Prostate gland (tissue), 2 donors: ENCODE measurements at regions of chr19 and their contacts with region 1.

Region 1: GRCh38 chr19:12162882-12163806 is at the start of gene ZNF136:
- DNase-seq: peak; percentile 89
- H3K4me3 ChIP-seq: peak within 1 kb of the TSS; percentile 72 to 89
- H3K27ac ChIP-seq: peak within 1 kb of the TSS; percentile 86 to 92
- H3K4me1 ChIP-seq: peaks cover 4% of the 10 kb centered on the region
- H3K27me3 ChIP-seq: no peaks in the 10 kb centered on the region
- CTCF ChIP-seq: no peak
- POLR2A ChIP-seq: peak; percentile 82
- total RNA-seq, gene ZNF136: 11.9 to 14.9 TPM

Region 2: DNA sequence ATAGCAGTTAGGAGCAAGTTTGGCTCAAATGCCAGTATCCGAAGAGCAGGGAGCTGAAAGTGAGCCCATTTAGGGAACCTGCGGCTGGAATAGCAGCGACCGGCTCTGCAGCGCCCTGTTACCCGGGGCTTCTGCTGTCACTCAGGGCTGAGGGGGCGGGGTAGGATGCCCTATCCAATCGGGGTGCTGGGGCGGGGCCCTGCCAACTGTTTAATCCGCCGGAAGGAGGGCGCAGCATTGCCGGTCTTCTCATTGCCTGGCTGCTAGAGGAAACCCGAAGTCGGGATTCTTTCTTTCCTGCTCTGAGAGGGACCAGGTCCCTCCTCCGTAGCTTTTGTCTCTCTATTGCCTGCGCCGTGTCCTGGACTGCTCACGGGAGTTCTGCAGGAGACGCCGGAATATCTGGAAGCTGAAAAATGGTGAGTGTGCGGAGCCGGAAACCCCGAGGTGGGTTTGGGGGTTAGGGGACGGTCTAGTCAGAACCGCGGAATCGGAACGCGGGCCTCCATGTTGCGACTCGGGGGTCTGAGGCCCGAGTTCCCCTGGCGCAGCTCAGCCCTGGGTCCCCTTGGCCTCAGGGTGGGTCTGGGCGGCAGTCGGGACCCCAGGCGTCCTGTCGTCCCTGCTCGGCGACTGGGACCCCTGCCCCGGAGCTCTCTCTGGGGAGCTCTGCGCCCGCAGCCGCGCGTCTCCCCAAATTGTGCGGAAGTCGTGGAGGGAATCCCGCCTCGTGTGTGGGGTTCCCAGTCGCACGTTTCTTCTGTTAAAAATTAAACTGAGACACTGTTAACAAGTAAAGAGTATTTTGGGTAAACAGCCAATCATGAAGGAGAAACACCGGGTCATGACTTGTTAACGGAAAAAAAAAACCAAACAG is 175.5 kb before region 1 on chr19:
- intact Hi-C with region 1: no loop called
- DNase-seq: peak; percentile 95
- H3K4me3 ChIP-seq: peak overlapping the region; percentile 65 to 73
- H3K27ac ChIP-seq: peak overlapping the region; percentile 77 to 85
- H3K4me1 ChIP-seq: no peaks in the 10 kb centered on the region
- H3K27me3 ChIP-seq: no peaks in the 10 kb centered on the region
- CTCF ChIP-seq: peak in 2 of 4 experiments; percentile 5 to 22
- POLR2A ChIP-seq: peak; percentile 68

Region 3: GRCh38 chr19:12064590-12065538 is 98.3 kb before region 1 on chr19 and contains the start of gene ZNF844:
- intact Hi-C with region 1: loop called (anchors 5 kb)
- DNase-seq: peak; percentile 97
- H3K4me3 ChIP-seq: peak within 1 kb of the TSS; percentile 90 to 91
- H3K27ac ChIP-seq: peak within 1 kb of the TSS; percentile 91 to 93
- H3K4me1 ChIP-seq: peaks cover 4% of the 10 kb centered on the region
- H3K27me3 ChIP-seq: no peaks in the 10 kb centered on the region
- CTCF ChIP-seq: peak in 1 of 4 experiments; percentile 25
- POLR2A ChIP-seq: peak; percentile 96
- total RNA-seq, gene ZNF844: 13.4 to 16.2 TPM

Region 4: GRCh38 chr19:12112701-12113100 is 50.4 kb before region 1 on chr19:
- intact Hi-C with region 1: no loop called
- DNase-seq: no peak
- H3K4me3 ChIP-seq: no peak overlapping the region
- H3K27ac ChIP-seq: no peak overlapping the region
- H3K4me1 ChIP-seq: no peaks in the 10 kb centered on the region
- H3K27me3 ChIP-seq: no peaks in the 10 kb centered on the region
- CTCF ChIP-seq: no peak
- POLR2A ChIP-seq: no peak

Region 5: GRCh38 chr19:12365236-12366162 is 202.4 kb after region 1 on chr19 and contains the start of gene ZNF442:
- intact Hi-C with region 1: loop called (anchors 10 kb)
- DNase-seq: peak; percentile 97
- H3K4me3 ChIP-seq: peak within 1 kb of the TSS; percentile 95 to 99
- H3K27ac ChIP-seq: peak within 1 kb of the TSS; percentile 91 to 93
- H3K4me1 ChIP-seq: no peaks in the 10 kb centered on the region
- H3K27me3 ChIP-seq: no peaks in the 10 kb centered on the region
- CTCF ChIP-seq: peak; percentile 30 to 68 (median 54)
- POLR2A ChIP-seq: peak; percentile 94
- total RNA-seq, gene ZNF442: 2.3 to 2.6 TPM